ENCODE measurements at regions of chr19 and their contacts with region 1.

Region 1: DNA sequence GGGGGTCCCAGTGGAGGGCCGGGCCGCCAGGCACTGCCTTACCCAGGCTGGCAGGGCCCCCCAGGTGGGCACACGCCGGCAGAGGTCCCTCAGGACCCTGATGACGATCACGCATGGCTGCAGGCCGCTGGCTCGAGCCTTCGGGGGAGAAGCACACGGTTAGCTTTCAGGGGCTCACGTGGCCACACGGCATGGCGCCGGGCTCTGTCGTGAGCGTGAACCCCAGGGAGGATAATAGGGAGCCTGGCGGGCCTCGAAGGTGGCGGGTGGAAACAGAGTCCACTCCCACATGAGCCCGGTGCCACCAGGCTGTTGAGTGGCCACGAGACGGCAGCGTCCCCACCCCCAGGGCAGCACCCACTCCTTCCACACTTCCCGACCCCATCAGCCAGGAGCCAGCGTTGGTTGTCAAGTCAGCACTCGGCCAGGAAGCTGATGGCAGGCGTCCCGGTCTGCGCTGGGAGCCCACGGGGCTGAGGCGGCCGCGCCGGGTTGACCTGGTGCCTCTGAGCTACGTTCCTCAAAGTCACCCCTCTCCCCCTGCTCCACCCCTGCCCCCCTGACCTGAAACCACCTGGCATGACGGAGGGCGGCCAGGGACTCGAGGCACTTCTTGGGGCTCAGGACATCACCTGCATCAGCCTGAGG is 24.7 kb upstream of the MATK start:
- DNase-seq: no peak
- ATAC-seq: no peak
- H3K4me3 Mint-ChIP-seq: no peak overlapping the region
- H3K27ac Mint-ChIP-seq: peak overlapping the region; percentile 52
- H3K4me1 Mint-ChIP-seq: peaks cover 56% of the 10 kb centered on the region
- H3K27me3 Mint-ChIP-seq: no peaks in the 10 kb centered on the region
- CTCF ChIP-seq: no peak

Region 2: DNA sequence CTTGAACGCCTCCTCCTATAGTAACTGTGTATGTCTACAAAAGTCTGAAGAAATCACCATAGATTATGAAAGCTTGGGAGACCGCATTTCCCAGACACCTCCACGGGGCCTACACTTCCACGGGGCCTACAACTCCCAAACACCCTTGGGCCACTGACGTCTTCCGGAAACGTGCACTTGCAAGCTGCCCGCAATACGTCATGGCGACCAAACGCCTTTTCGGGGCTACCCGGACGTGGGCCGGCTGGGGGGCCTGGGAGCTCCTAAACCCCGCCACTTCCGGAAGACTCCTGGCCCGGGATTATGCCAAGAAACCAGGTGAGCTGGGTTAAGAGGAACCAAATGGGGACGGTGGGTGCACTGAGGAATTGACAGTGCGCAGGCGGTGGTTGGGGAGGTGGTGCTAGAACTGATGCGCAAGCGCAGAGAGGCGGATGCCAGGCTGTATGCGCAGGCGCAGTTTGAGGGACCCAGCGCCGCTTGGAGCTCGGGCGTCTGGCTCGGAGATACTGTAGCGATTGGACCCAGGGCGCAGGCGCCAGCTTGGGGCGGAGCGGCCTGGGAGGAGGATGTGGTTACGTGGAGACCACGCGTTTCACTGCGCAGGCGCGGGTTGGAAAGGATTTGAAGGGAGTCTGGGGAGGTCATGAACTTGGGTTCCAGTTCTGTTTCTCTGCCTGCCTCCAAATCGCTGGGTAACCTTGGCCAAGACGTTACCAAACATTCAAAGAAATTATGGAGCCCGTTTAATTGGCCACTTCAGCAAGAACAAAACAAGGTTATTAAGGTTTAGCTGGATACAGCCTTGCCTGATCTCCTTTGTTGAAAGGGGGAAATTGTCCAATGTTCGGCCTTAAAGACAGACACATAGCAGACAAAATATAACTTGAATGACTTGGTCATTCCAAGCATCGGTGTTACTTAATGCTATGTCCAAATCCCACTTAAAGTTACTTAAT is 48.1 kb before region 1 on chr19 and contains the start of gene MRPL54:
- CTCF ChIA-PET with region 1: interaction called, 6 read pairs
- POLR2A ChIA-PET with region 1: interaction called, 10 read pairs
- intact Hi-C with region 1: loop called (anchors 10 kb)
- DNase-seq: peak; percentile 99
- ATAC-seq: peak; percentile 87
- H3K4me3 Mint-ChIP-seq: peak within 1 kb of the TSS; percentile 99
- H3K27ac Mint-ChIP-seq: peak within 1 kb of the TSS; percentile 99
- H3K4me1 Mint-ChIP-seq: peaks cover 39% of the 10 kb centered on the region
- H3K27me3 Mint-ChIP-seq: no peaks in the 10 kb centered on the region
- CTCF ChIP-seq: no peak
- total RNA-seq, gene MRPL54: 47.4 to 50.9 TPM